Psoas muscle (tissue), 8 donors: ENCODE measurements at regions of chr11 and their contacts with region 1.

Region 1: DNA sequence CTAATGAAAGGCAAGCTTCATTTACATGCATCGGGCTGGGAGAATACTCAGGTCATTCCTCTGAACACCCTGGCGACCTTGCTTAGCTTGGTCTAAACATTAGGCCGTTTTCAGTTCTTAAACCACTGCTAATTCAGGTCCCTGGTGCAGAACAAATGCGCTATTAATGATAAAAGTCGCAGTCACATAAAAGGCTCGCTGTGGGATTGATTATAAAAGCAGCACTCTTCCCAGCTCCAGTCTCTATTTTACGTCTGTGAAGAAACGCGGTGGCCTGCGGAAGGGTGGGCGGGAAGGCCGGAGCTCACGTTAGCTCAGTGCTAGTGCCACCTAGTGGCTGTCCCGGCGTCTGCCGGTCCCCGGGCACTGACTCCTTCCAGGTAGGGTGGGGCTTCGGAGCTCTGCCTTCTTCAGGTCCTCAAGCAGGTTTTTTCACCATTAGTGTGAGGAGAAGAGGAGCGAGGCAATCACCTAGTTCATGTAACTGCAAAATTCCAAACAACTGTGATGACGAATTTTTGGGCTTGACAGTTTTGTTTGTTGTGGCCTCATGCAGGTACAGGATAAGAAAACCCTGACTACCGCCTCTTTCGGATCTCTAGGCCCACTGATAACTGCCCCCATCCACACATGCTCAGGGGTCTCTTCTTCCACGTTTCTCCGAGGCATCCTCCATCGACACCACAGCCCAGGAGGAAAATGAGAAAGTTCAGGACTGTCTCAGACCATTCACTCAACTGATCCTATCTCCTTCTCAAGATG is 66.5 kb upstream of the CLMP start:
- DNase-seq: peak; percentile 79 to 87
- ATAC-seq: peak; percentile 79 to 98 (median 92)
- H3K4me3 ChIP-seq: peak overlapping the region; percentile 51
- H3K27ac ChIP-seq: no peak overlapping the region
- H3K4me1 ChIP-seq: no peaks in the 10 kb centered on the region
- H3K27me3 ChIP-seq: peaks cover 0 to 6% (median 0%) of the 10 kb centered on the region in 3 donors
- CTCF ChIP-seq: peak; percentile 80

Region 2: GRCh38 chr11:123103326-123103980 is 158.1 kb before region 1 on chr11:
- intact Hi-C with region 1: loop called (anchors 5 kb)
- DNase-seq: peak in 1 of 2 donors; percentile 20
- ATAC-seq: peak; percentile 36 to 89 (median 68)
- H3K4me3 ChIP-seq: no peak overlapping the region
- H3K27ac ChIP-seq: no peak overlapping the region
- H3K4me1 ChIP-seq: peaks cover 6% of the 10 kb centered on the region
- H3K27me3 ChIP-seq: no peaks in the 10 kb centered on the region
- CTCF ChIP-seq: peak; percentile 55

Region 3: GRCh38 chr11:123321636-123322035 is 60.1 kb after region 1 on chr11:
- intact Hi-C with region 1: no loop called
- DNase-seq: no peak
- ATAC-seq: no peak
- H3K4me3 ChIP-seq: no peak overlapping the region
- H3K27ac ChIP-seq: no peak overlapping the region
- H3K4me1 ChIP-seq: no peaks in the 10 kb centered on the region
- H3K27me3 ChIP-seq: no peaks in the 10 kb centered on the region
- CTCF ChIP-seq: no peak